ENCODE measurements at regions of chr12 and their contacts with region 1.

Region 1: DNA sequence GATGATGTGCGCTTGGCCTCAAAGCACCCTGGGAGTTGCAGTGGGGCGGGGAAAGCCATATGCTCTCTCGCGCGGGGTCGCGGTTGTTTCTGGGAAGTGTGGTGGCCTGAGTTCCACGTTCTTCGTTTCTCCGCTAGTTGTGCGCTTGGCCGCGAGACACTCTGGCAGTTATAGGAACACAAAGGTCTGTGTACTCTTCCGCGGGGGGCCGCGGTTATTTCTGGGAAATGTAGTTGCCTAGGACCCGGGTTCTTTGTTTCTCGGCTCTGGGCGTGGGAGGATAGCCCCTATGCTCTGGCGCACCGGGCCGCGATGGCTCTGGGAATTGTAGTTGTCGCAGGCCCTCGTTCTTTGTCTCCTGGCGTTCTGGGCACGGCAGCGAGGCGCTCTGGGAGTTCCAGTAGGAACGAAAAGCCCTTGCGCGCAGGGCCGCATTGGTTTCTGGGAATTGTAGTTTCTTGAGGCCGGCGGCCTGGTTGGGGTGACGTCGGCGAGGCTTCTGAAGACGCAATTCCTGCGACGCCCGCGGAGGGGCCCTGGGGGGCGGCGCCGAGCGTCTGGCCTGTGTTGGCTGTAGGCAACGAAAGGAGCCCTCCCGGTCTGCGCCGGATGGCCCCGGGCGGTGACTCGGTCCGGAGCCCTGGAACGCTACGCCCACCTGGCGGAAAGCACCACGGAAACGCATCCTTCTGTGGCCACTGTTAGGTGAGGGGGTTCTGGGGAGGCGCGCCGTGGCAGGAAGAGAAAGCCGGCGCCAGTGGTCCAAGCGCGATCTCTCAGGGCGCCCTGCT is at the start of gene ZNF140:
- DNase-seq: peak; percentile 83 to 98
- H3K4me3 ChIP-seq: peak within 1 kb of the TSS; percentile 71 to 91
- H3K27ac ChIP-seq: peak within 1 kb of the TSS; percentile 95 to 97
- H3K4me1 ChIP-seq: no peaks in the 10 kb centered on the region
- H3K27me3 ChIP-seq: no peaks in the 10 kb centered on the region
- CTCF ChIP-seq: peak in 2 of 3 experiments; percentile 12 to 25
- total RNA-seq, gene ZNF140: 11.6 TPM

Region 2: DNA sequence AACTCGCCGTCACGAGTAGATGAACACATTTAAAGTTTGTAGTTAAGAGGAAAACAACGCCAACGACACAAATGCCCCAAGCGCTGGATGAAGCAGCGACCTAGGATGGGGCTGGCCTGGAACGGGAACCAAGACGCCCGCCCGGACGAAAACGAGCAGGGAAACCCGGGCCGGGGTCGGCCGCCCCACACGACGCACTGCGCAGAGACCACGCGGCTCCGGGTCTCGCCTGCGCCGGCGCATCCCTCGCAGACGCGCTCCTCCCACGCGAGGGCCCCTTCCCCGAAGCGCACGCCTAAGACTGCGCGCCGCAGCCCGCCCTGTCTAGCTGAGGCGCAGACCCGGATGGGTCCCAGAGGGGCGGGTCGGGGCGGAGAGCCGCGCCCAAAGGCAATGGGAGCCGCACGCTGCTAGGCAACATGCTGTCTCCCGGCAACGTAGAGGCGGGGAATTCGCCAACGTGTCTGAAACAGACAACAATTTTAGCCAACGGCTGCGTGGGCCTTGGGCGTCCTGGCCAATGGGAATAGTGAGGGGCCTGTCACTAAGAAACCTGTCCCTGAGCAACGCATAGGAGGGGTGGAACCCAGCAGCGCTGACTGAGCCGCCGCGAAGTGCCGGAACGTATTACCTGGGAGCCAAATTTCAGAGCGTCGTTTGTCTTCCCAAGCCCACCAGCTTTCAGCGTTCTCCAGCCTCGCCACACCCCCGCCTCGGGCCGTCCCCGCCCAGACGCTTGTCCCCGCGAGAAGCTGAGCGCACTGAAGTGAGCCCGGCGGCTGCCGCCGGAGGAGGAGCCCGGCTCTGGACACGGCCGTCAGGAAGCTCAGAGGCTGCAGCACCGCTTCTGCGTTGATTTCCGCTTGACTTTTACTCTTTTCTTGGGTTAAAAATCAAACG is 172.2 kb before region 1 on chr12:
- intact Hi-C with region 1: loop called (anchors 1 kb)
- DNase-seq: peak; percentile 83 to 96
- H3K4me3 ChIP-seq: peak overlapping the region; percentile 79 to 86
- H3K27ac ChIP-seq: peak overlapping the region; percentile 83 to 85
- H3K4me1 ChIP-seq: peaks cover 0 to 6% of the 10 kb centered on the region in 2 donors
- H3K27me3 ChIP-seq: no peaks in the 10 kb centered on the region
- CTCF ChIP-seq: no peak

Region 3: GRCh38 chr12:132956011-132956788 is 124.4 kb before region 1 on chr12 and contains the start of gene ZNF605:
- intact Hi-C with region 1: loop called (anchors 1 kb)
- DNase-seq: peak; percentile 41 to 91
- H3K4me3 ChIP-seq: peak within 1 kb of the TSS; percentile 80 to 98
- H3K27ac ChIP-seq: peak within 1 kb of the TSS; percentile 89 to 92
- H3K4me1 ChIP-seq: peaks cover 0 to 2% of the 10 kb centered on the region in 2 donors
- H3K27me3 ChIP-seq: no peaks in the 10 kb centered on the region
- CTCF ChIP-seq: no peak
- total RNA-seq, gene ZNF605: 1.3 TPM

Region 4: DNA sequence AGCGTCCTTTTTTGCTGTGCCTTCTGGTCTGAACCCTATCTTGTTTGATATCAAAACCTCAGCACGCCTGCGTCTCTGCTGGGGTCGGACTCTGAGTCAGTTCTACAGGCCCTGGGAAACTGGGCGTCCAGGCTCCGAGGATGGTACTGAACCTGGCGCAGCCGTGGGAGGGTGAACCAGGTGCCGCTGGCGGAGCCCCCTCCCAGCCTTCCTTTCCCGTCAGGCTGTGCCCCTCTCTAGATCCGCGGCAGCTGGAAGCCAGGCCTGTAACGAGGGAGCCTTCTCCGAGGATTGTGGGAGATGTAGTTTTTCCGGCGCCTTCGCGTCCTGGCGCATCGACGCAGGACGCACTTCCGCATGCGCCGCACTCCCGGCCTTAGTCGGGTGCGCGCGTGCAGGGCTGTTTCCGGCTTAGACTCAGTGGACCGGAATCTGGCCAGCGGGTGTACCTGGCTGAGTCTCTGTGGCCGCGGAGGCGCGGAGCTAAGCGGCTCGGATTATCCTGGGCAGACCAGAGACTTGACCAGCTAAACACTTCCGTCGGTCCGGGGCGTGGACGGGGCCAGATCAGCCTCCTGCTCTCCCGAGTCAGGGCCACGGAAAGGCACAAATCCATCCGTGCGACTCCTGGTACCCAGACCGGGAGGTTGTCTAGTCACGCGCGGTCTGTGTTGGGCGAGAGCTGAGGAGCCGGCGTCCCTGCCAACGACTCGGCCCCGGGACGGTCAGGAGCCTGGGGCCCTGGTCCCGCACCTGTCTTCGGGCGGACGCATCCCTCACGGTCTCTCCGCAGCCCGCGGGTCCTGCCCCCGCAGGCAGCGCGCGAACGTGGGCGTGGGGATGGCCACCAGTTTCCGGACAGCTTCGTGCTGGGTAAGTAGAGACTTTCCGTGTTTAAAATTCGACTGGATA is 94.3 kb before region 1 on chr12 and contains the start of gene ZNF26:
- intact Hi-C with region 1: loop called (anchors 1 kb)
- DNase-seq: peak; percentile 64 to 94
- H3K4me3 ChIP-seq: peak within 1 kb of the TSS; percentile 81 to 84
- H3K27ac ChIP-seq: peak within 1 kb of the TSS; percentile 84 to 93
- H3K4me1 ChIP-seq: peaks cover 3 to 6% of the 10 kb centered on the region in 2 donors
- H3K27me3 ChIP-seq: no peaks in the 10 kb centered on the region
- CTCF ChIP-seq: no peak
- total RNA-seq, gene ZNF26: 73.4 TPM

Region 5: DNA sequence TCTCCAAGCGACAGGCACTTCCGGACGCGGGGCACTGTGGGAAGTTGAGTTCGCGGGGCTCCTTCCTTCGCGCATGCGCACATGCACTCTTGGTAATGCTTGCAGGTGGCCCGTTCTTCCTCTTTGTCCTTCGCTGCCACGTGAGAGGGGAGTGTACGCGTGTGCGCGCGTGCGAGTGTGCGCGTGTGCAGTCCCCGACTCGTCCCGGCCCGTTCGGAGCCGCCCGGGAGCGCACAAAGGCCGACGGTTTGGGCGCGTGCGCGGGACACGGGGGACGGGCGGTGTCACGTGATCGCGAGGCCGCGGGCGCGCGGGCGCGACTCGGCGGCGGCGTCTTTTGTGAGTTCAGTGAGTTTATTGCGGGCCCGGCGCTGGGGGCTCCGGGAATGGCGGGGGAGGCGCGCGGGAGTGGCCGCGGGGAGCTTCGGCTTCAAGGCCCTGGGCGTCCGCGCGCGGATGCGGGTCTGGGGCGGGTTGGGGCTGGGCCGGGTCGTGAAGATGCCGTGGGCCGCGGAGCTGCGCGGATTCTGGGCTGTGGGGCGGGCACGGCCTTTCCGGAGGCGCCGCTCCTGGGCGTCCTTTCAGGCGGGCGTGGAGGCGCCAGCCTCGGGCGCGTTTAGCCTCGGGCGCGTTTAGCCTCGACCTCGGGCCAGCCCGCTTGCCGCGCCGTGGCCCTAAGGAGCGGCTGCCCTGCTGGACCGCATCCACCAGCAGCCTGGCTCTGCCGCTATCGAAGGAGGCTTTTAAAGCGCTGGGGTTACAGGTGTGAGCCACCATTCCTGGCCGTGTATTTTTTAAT is 43.2 kb before region 1 on chr12 and contains the start of gene ZNF84:
- intact Hi-C with region 1: loop called (anchors 1 kb)
- DNase-seq: peak; percentile 87 to 97
- H3K4me3 ChIP-seq: peak within 1 kb of the TSS; percentile 83 to 99
- H3K27ac ChIP-seq: peak within 1 kb of the TSS; percentile 95 to 98
- H3K4me1 ChIP-seq: peaks cover 0 to 3% of the 10 kb centered on the region in 2 donors
- H3K27me3 ChIP-seq: no peaks in the 10 kb centered on the region
- CTCF ChIP-seq: no peak
- total RNA-seq, gene ZNF84: 2.7 TPM

Region 6: DNA sequence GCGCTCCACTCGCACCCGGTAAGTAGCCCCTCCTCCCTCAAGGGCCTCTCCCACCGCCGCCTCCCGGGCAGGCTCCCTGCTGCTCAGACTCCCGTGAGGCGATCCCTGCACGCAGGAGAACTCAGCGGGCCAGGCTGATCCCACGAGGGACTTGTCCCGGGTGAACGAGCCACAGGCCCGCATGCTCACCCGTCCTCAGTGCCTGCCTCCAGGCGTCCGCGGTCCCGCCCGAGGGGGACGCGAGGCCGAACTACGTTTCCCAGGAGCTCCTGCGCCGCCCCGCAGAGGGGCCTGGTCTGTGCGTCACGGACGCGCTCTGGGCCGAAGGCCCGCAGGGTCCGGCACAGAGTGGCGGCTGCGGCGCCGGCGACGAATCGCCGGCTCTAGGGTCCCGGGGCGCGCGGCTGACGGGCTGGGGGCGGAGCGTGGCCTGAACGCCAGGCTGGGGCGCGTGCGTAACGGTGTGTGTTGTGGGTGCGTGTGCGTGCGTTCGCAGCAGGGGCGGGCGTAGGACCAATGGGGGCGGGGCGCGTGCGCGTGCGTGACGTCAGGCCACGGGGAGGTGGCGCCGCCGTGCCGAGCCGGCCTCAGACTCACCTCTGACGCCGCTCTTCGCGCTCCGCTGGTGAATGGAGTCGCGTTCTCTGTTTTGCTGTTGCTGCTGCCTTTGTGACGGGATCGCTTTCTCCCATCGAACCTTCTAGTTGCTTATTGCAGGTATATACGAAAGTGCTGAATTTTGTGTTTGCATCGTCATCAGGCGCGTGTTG is 49.7 kb after region 1 on chr12 and contains the starts of genes ZNF10 and ZNF891:
- intact Hi-C with region 1: loop called (anchors 1 kb)
- DNase-seq: peak; percentile 78 to 97
- H3K4me3 ChIP-seq: peak within 1 kb of the TSS; percentile 90 to 94
- H3K27ac ChIP-seq: peak within 1 kb of the TSS; percentile 89 to 93
- H3K4me1 ChIP-seq: peaks cover 0 to 7% of the 10 kb centered on the region in 2 donors
- H3K27me3 ChIP-seq: no peaks in the 10 kb centered on the region
- CTCF ChIP-seq: peak in 1 of 3 experiments; percentile 3
- total RNA-seq, gene ZNF10: 3.8 TPM
- total RNA-seq, gene ZNF891: 2.0 TPM

Region 7: GRCh38 chr12:133181238-133181959 is 100.8 kb after region 1 on chr12 and contains the start of gene ZNF268:
- intact Hi-C with region 1: loop called (anchors 1 kb)
- DNase-seq: peak; percentile 19 to 93
- H3K4me3 ChIP-seq: peak within 1 kb of the TSS; percentile 86
- H3K27ac ChIP-seq: peak within 1 kb of the TSS; percentile 46 to 72
- H3K4me1 ChIP-seq: no peaks in the 10 kb centered on the region
- H3K27me3 ChIP-seq: no peaks in the 10 kb centered on the region
- CTCF ChIP-seq: peak; percentile 49 to 76 (median 61)
- total RNA-seq, gene ZNF268: 38.5 TPM